Dendritic cell treated with granulocyte-macrophage colony-stimulating factor and Interleukin-4, amounts not matched to agents 40 ng/mL and 50 ng/mL, for 4 days (primary cell): ENCODE measurements at regions of chr9 and their contacts with region 1.

Region 1: GRCh38 chr9:99474186-99474585 is 252.1 kb downstream of the SEC61B start:
- H3K4me3 Mint-ChIP-seq: no peak overlapping the region
- H3K27ac Mint-ChIP-seq: no peak overlapping the region
- H3K4me1 Mint-ChIP-seq: peaks cover 42% of the 10 kb centered on the region
- H3K27me3 Mint-ChIP-seq: no peaks in the 10 kb centered on the region

Region 2: GRCh38 chr9:99336005-99336404 is 138.2 kb before region 1 on chr9:
- intact Hi-C with region 1: no loop called
- H3K4me3 Mint-ChIP-seq: no peak overlapping the region
- H3K27ac Mint-ChIP-seq: no peak overlapping the region
- H3K4me1 Mint-ChIP-seq: no peaks in the 10 kb centered on the region
- H3K27me3 Mint-ChIP-seq: peaks cover 3% of the 10 kb centered on the region

Region 3: DNA sequence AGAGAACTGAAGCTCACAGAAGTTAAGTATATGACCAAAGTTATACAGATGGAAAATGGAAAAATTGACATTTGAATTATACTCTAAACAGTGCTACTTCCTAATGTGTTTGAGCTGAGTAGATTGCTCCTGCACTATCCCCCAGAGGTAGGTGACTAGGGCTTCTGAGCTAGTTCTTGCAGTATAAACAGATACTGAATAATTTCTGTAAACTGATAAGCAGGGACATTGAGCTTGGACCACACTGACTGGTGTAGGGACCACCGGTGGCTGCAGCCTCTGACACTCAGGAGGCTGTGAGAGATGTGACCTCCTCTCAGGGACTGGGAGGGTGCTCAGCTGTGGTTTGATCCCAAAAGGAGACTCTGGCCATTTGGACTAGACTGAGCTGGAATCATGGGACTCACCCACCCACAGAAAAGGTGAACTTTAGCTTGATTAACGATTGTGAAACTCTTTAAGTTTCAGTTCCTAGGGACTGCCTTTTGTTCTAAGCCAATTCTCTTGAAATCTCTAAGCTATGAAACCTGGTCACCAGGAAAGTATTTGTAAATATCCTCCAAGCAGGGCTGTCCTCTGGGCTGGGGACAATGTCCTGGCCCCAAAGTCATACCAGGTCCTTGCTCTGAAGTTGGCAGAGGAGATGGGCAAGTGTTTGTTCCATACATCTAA is 39.4 kb after region 1 on chr9:
- intact Hi-C with region 1: loop called (anchors 5 kb)
- H3K4me3 Mint-ChIP-seq: no peak overlapping the region
- H3K27ac Mint-ChIP-seq: peak overlapping the region; percentile 81
- H3K4me1 Mint-ChIP-seq: peaks cover 50% of the 10 kb centered on the region
- H3K27me3 Mint-ChIP-seq: no peaks in the 10 kb centered on the region